ENCODE measurements at regions of chr3 and their contacts with region 1.

Region 1: GRCh38 chr3:62873761-62874647 is 1.2 kb downstream of the CADPS start:
- DNase-seq: peak; percentile 23 to 96 (median 72)

Region 2: DNA sequence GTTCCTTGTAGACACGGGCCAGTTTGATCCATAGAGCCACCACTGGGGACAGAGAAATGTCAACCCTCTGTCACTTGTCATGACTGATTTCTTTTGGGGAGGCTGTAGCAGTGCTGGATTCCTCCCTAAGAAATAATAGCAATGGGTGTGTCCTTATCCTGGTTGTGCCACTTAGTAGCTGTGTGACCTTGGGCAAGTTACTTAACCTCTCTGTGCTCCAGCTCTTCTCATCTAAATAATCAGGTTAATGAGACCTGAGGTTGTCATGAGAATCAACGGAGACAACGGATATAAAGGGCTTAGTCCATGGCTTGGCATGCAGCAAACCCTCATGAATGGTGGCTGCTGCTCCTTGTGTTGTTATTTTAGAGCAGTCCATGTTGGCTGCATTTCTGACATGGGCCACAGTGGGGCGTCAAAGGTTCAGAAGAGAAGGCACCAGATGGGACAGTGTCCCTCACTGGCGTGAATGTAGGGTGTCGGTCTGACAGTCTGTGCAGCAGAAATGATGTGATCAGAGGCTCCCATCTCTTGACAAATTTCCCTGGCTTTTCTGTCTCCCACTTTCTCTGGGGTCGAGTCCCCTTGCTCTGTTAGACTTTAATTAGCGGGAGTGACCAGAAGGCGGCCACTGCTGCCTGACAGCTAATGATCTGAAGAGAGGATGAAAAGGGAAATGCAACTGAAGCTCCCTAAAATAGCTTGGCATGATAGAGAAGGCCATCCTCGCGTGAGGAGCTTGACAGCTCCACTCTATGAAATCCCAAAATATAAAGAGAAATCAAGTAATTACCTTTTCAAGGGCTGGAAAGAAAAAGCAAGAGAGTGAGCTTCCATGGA is 208.2 kb before region 1 on chr3:
- intact Hi-C with region 1: loop called (anchors 10 kb)
- DNase-seq: peak; percentile 66 to 96 (median 78)